ENCODE measurements at regions of chr14 and their contacts with region 1.

Region 1: GRCh38 chr14:57378669-57379068 is 11.7 kb upstream of the NAA30 start:
- DNase-seq: no peak
- ATAC-seq: no peak
- H3K4me3 ChIP-seq: no peak overlapping the region
- H3K27ac ChIP-seq: no peak overlapping the region
- H3K4me1 ChIP-seq: peaks cover 16% of the 10 kb centered on the region; the same call in 1 of the 2 replicates
- H3K27me3 ChIP-seq: no peaks in the 10 kb centered on the region
- CTCF ChIP-seq: no peak
- EP300 ChIP-seq: no peak
- POLR2A ChIP-seq: no peak
- RAD21 ChIP-seq: no peak

Region 2: DNA sequence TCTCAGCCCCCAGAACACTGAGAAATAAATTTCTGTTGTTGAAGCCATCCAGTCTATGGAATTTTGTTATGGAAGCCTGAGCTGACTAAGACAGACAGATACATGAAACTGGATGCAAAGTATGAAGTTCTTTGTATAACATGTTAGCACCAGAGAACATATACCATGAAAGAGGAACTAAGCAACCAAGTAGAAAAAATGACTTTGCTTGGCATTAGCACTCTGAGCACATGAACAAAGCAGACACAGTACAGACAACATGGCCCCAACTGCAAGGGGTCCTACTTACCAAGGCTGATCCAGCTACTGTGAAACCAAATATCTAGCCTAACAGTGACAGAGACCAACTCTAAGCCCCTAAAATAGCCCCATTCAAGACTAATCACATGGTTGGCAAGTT is 123.8 kb before region 1 on chr14:
- CTCF ChIA-PET with region 1: no interaction called
- POLR2A ChIA-PET with region 1: no interaction called
- in situ Hi-C with region 1: no loop called
- intact Hi-C with region 1: no loop called
- DNase-seq: no peak
- ATAC-seq: no peak
- H3K4me3 ChIP-seq: no peak overlapping the region
- H3K27ac ChIP-seq: no peak overlapping the region
- H3K4me1 ChIP-seq: no peaks in the 10 kb centered on the region
- H3K27me3 ChIP-seq: no peaks in the 10 kb centered on the region
- CTCF ChIP-seq: no peak
- EP300 ChIP-seq: no peak
- POLR2A ChIP-seq: no peak
- RAD21 ChIP-seq: no peak

Region 3: DNA sequence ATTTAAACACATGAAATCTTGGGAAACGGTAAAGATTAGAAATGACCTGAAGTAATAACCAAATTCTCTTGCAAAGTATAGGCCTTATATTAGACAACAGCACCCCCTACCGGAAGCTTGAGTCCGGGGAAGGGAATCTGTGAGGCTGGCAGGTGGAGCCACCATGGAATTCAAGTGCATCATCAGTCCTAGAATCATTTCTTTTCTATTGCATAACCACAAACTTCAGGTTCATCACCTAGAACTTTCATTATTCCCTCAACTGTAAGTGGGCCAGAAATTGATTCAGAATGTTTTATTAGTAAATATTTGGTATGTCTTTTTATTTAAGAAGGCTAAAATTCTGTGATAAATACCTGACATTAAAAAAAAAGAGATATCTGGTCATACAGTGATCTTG is 61.4 kb before region 1 on chr14:
- CTCF ChIA-PET with region 1: interaction called, 6 read pairs
- POLR2A ChIA-PET with region 1: no interaction called
- in situ Hi-C with region 1: no loop called
- intact Hi-C with region 1: loop called (anchors 2 kb)
- DNase-seq: peak; percentile 76
- ATAC-seq: peak; percentile 74; the same call in 2 of the 3 replicates
- H3K4me3 ChIP-seq: no peak overlapping the region
- H3K27ac ChIP-seq: no peak overlapping the region
- H3K4me1 ChIP-seq: no peaks in the 10 kb centered on the region
- H3K27me3 ChIP-seq: peaks cover 3 to 13% of the 10 kb centered on the region in 2 experiments; a peak in 2 of 5 replicates
- CTCF ChIP-seq: peak; percentile 80
- EP300 ChIP-seq: no peak
- POLR2A ChIP-seq: no peak
- RAD21 ChIP-seq: 0 out of 2 replicates have a peak, but pooled peaks have one; percentile 54

Region 4: DNA sequence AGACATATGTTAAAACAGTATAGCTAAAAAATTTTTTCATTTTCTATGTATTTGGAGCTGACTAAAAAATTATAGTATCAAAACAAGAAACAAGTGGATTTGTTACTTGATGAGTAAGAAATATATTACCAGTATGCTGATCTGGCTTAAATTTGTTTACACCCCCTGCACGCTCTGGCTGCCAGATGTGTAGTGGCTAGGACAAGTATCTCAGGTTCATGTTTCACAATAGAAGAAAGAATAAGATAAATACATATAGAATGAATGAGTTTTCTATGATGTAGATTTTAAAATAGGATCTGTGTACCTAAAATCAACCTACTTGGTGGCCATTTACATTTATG is 24.8 kb after region 1 on chr14:
- CTCF ChIA-PET with region 1: no interaction called
- POLR2A ChIA-PET with region 1: no interaction called
- in situ Hi-C with region 1: no loop called
- intact Hi-C with region 1: no loop called
- DNase-seq: no peak
- ATAC-seq: no peak
- H3K4me3 ChIP-seq: no peak overlapping the region
- H3K27ac ChIP-seq: no peak overlapping the region
- H3K4me1 ChIP-seq: peaks cover 7% of the 10 kb centered on the region; the same call in 1 of the 2 replicates
- H3K27me3 ChIP-seq: no peaks in the 10 kb centered on the region
- CTCF ChIP-seq: no peak
- EP300 ChIP-seq: no peak
- POLR2A ChIP-seq: no peak
- RAD21 ChIP-seq: no peak

Measured in HepG2 (cell line).